ENCODE measurements at regions of chr11 and their contacts with region 1.

Region 1: DNA sequence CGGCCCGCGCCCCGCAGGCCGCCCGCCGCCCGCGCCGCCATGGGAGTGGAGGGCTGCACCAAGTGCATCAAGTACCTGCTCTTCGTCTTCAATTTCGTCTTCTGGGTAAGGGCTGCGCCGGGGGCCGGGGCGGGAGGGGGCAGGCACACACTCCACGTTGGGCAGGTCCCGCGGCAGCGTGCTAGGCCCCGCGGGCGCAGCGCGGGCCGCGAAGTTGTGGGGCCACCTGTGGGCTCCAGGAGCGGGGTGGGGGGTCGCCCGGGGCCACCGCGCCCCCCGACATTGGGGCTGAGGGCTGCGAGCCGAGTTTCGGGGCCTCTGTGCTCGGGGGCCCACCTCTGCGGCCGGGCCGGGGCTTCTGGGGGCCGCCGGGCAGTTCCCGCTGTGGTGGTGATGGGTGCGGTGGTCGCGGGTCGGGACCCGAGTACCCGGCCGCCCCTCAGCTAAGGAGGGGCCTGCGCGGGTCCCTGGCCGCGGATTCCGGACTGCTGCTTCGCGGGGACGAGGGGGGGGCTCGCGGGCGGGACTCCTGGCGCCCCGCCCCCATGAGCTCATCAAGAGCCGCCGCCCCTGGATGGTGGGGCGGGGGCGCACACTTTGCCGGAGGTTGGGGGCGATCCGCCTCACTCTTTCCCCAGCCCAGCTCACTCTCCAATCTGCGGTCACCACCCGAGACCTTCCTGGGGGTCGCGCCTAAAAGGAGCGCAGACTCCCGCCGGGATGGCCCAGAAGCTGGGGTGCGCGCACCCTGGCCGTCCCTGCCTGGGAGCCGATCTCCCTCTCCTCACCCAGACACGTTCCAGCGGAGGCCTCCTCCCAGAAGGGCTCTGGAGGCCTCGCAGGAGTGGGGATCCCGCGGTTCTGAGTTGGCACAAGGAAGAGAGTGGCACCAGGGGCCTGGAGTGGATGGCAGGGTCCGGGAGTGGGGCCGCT is 667 bp downstream of the CD81 start:
- DNase-seq: peak; percentile 69
- H3K4me3 Mint-ChIP-seq: peak overlapping the region; percentile 89
- H3K27ac Mint-ChIP-seq: peak overlapping the region; percentile 84
- H3K4me1 Mint-ChIP-seq: peaks cover 24% of the 10 kb centered on the region
- H3K27me3 Mint-ChIP-seq: no peaks in the 10 kb centered on the region

Region 2: DNA sequence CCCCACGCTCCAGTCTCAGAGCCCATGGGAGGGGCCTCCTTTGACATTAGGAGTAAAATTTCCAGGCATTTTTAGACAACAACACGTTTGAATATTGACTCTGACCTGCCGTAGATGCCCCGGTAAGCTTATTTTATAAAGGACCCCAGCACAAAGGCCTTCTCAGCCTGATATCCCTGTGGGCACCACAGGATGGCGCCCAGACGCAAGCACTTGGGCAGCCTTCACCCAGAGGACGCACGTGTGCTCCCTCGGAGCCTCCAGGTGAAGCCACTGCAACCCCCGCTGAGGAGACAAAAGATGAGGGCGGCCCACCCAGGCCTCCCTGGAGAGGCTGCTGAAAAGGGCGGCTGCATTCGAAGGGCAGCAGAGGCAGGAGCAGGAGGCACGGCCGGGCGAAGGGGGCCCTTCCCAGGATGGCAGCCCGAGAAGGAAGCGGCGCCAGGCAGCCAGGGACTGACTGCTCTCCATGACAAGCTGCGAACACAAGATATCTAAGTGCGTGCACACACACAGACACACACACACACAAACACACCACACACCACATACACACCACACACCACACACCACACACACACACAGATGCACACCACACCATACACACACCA is 191.0 kb before region 1 on chr11:
- CTCF ChIA-PET with region 1: no interaction called
- POLR2A ChIA-PET with region 1: no interaction called
- intact Hi-C with region 1: no loop called
- DNase-seq: peak; percentile 56
- H3K4me3 Mint-ChIP-seq: no peak overlapping the region
- H3K27ac Mint-ChIP-seq: no peak overlapping the region
- H3K4me1 Mint-ChIP-seq: no peaks in the 10 kb centered on the region
- H3K27me3 Mint-ChIP-seq: peaks cover 14% of the 10 kb centered on the region

Region 3: DNA sequence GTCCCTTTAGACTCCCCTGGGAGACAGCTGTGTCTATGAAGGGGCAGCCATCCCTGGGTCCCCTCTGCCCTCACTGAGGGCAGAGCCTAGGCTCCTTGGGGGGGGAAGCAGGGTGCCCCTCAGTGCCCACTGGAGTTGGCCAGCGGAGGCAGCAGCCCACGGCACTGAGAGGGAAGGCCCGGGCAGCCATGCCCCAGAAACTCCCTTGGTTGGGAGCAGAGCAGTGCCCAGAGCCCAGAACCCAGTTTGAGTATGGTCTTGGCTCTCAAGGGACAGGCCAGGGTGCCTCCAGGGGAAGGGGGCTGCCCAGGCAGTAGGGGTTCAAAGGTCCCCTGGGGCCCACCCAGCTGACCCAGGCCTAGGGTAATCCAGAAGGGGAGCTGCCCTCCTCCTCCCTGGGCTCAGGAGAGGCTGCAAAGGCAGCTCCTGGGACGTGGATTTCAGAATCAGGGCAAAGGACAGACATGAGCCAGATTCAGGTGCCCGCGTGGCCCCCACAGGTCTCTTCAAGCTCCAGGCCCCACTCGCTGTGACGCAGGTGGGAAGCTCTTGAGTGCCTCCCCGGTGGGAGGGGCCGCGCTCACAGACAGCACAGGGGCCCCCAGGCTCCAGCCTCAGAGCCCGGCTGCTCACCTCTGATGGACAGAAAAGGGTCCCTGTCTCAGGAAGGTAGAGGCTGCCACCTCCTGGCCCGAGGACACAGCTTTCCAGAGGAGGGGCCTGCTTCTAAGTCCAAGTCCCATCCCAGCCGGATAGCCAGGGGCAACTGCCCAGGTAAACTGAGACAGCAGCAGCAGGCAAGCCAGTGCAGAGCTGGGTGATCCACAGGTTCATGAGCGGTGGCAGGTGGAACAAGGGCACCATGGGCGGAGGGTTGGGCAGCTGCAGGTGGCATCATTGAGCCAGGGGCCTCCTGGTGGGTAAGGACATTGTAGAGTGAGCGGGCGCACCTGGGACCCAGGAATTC is 78.7 kb before region 1 on chr11:
- CTCF ChIA-PET with region 1: interaction called, 10 read pairs
- POLR2A ChIA-PET with region 1: interaction called, 7 read pairs
- intact Hi-C with region 1: loop called (anchors 2 kb)
- DNase-seq: peak; percentile 43
- H3K4me3 Mint-ChIP-seq: no peak overlapping the region
- H3K27ac Mint-ChIP-seq: no peak overlapping the region
- H3K4me1 Mint-ChIP-seq: peaks cover 26% of the 10 kb centered on the region
- H3K27me3 Mint-ChIP-seq: no peaks in the 10 kb centered on the region

Region 4: GRCh38 chr11:2305140-2305840 is 72.5 kb before region 1 on chr11:
- CTCF ChIA-PET with region 1: interaction called, 23 read pairs
- POLR2A ChIA-PET with region 1: interaction called, 7 read pairs
- intact Hi-C with region 1: loop called (anchors 2 kb)
- DNase-seq: peak; percentile 88
- H3K4me3 Mint-ChIP-seq: no peak overlapping the region
- H3K27ac Mint-ChIP-seq: no peak overlapping the region
- H3K4me1 Mint-ChIP-seq: peaks cover 42% of the 10 kb centered on the region
- H3K27me3 Mint-ChIP-seq: no peaks in the 10 kb centered on the region